Endothelial cell of umbilical vein (primary cell): ENCODE measurements at regions of chr21 and their contacts with region 1.

Region 1: GRCh38 chr21:18041012-18041411 is 203.6 kb upstream of the CHODL start:
- DNase-seq: peak; percentile 59
- H3K4me3 ChIP-seq: no peak overlapping the region
- H3K27ac ChIP-seq: no peak overlapping the region
- H3K4me1 ChIP-seq: no peaks in the 10 kb centered on the region
- H3K27me3 ChIP-seq: no peaks in the 10 kb centered on the region
- CTCF ChIP-seq: peak; percentile 40 to 56
- POLR2A ChIP-seq: no peak

Region 2: GRCh38 chr21:17925000-17925610 is 115.9 kb before region 1 on chr21:
- CTCF ChIA-PET with region 1: interaction called, 10 read pairs
- POLR2A ChIA-PET with region 1: no interaction called
- dilution Hi-C with region 1: no loop called
- intact Hi-C with region 1: no loop called
- DNase-seq: peak; percentile 42
- H3K4me3 ChIP-seq: no peak overlapping the region
- H3K27ac ChIP-seq: no peak overlapping the region
- H3K4me1 ChIP-seq: no peaks in the 10 kb centered on the region
- H3K27me3 ChIP-seq: no peaks in the 10 kb centered on the region
- CTCF ChIP-seq: peak; percentile 79 to 80
- POLR2A ChIP-seq: no peak

Region 3: DNA sequence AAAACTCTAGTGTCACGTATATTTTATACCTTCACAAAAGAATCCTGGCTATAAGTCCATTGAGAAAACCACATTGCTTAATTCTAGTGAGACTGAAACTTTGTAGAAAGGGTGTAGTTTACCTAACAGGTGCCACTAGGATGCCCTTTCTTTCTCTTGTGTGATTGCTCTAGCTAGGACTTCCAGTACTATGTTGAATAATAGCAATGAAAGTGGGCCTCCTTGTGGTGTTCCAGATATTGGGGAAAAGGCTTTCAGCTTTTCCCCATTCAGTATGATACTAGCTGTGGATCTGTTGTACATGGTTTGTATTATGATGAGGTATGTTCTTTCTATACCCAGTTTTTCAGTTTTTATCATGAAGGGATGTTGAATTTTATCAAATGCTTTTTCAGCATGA is 163.9 kb after region 1 on chr21:
- CTCF ChIA-PET with region 1: interaction called, 214 read pairs
- POLR2A ChIA-PET with region 1: no interaction called
- dilution Hi-C with region 1: no loop called
- intact Hi-C with region 1: loop called (anchors 1 kb)
- DNase-seq: peak; percentile 17
- H3K4me3 ChIP-seq: no peak overlapping the region
- H3K27ac ChIP-seq: no peak overlapping the region
- H3K4me1 ChIP-seq: no peaks in the 10 kb centered on the region
- H3K27me3 ChIP-seq: no peaks in the 10 kb centered on the region
- CTCF ChIP-seq: peak in 1 of 2 donors; percentile 24
- POLR2A ChIP-seq: no peak

Region 4: DNA sequence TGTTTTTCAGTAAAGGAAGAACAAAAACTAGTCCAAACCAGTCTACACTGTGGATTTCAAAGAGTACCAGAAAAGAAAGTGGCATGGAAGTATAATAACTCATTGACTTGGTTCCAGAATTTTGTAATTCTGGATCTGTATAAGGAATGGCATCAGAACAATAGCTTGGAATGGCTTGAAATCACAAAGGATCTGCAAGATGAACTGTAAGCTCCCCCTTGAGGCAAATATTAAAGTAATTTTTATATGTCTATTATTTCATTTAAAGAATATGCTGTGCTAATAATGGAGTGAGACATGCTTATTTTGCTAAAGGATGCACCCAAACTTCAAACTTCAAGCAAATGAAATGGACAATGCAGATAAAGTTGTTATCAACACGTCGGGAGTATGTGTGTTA is 224.9 kb after region 1 on chr21:
- CTCF ChIA-PET with region 1: interaction called, 129 read pairs
- POLR2A ChIA-PET with region 1: no interaction called
- dilution Hi-C with region 1: no loop called
- intact Hi-C with region 1: loop called (anchors 1 kb)
- DNase-seq: no peak
- H3K4me3 ChIP-seq: no peak overlapping the region
- H3K27ac ChIP-seq: no peak overlapping the region
- H3K4me1 ChIP-seq: no peaks in the 10 kb centered on the region
- H3K27me3 ChIP-seq: no peaks in the 10 kb centered on the region
- CTCF ChIP-seq: no peak
- POLR2A ChIP-seq: no peak

Region 5: GRCh38 chr21:18369115-18369514 is 328.1 kb after region 1 on chr21:
- CTCF ChIA-PET with region 1: interaction called, 11 read pairs
- POLR2A ChIA-PET with region 1: no interaction called
- dilution Hi-C with region 1: no loop called
- intact Hi-C with region 1: loop called (anchors 1 kb)
- DNase-seq: peak; percentile 1
- H3K4me3 ChIP-seq: no peak overlapping the region
- H3K27ac ChIP-seq: no peak overlapping the region
- H3K4me1 ChIP-seq: no peaks in the 10 kb centered on the region
- H3K27me3 ChIP-seq: no peaks in the 10 kb centered on the region
- CTCF ChIP-seq: no peak
- POLR2A ChIP-seq: no peak